Mammary epithelial cell (primary cell): ENCODE measurements at regions of chr14 and their contacts with region 1.

Region 1: DNA sequence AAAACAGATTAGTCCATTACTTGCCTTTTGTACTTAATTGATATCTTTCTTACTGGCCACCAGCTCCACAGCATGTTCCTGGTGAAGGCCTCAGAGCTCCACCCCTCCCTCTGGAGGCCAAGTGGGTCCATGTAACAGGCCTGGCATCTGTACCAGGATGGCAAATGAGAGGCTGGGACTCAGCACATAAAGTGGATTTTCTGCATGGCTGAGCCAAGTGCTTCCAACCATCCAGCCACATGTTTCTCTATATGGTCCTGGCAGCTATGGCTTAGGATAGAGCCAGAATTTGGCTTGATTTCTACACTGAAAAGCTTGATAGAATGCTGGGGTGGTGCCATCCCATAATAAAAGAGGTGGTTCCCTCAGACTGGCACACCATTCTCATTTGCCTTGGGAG is 94.1 kb downstream of the PAX9 start:
- DNase-seq: no peak
- H3K4me3 ChIP-seq: no peak overlapping the region
- H3K27ac ChIP-seq: no peak overlapping the region
- H3K4me1 ChIP-seq: no peaks in the 10 kb centered on the region
- H3K27me3 ChIP-seq: peaks cover 2% of the 10 kb centered on the region
- CTCF ChIP-seq: no peak

Region 2: DNA sequence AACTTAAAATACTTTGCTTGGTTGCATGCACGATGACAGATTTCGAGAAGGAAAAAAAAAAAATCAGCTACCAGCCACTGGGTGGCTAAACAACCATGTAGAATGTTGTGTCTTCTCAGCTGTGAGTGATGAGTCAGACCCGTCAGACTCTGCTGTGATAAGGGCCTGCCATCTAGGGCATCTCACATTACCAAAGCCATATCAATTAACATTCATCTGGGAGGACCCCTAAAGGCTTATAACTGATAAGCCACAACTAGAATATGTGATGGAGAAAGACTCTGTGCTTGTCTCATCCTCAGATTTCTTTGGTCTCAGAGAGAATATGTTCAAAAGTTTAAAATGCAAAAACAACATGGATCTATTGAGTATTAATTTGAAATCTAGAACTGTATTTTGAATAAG is 17.4 kb after region 1 on chr14:
- CTCF ChIA-PET with region 1: interaction called, 10 read pairs
- dilution Hi-C with region 1: no loop called
- in situ Hi-C with region 1: no loop called
- intact Hi-C with region 1: no loop called
- DNase-seq: peak; percentile 48
- H3K4me3 ChIP-seq: no peak overlapping the region
- H3K27ac ChIP-seq: no peak overlapping the region
- H3K4me1 ChIP-seq: no peaks in the 10 kb centered on the region
- H3K27me3 ChIP-seq: no peaks in the 10 kb centered on the region
- CTCF ChIP-seq: peak; percentile 39 to 46